Activated CD4-positive, alpha-beta T cell treated with anti-CD3 and anti-CD28 coated beads, Interleukin-2, amount 10 ng/mL, durations not matched to agents 7 days and 5 days (primary cell): ENCODE measurements at regions of chrX and their contacts with region 1.

Region 1: GRCh38 chrX:17046478-17047097 is 100.1 kb downstream of the REPS2 start:
- DNase-seq: peak; percentile 48
- H3K4me3 Mint-ChIP-seq: no peak overlapping the region
- H3K27ac Mint-ChIP-seq: no peak overlapping the region
- H3K4me1 Mint-ChIP-seq: peaks cover 2% of the 10 kb centered on the region
- H3K27me3 Mint-ChIP-seq: no peaks in the 10 kb centered on the region

Region 2: DNA sequence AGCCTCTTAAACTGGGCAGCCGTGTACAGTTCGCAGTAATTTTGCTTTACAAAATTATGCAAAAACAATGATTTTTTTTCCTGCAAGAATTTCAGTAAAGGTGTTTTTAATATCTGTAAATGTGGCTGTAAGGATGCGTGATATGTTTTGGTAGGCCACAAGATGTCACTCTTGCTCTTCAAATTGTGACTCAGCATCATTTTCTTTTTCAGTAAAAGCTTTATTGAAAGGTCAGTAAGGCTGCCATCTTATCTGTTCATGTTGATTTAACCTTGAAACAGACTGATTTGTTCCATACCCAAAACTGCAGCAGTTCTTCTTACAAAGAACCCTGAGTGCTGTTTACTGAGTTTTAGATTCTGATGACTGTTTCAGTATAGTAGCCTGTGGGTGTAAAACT is 220.4 kb before region 1 on chrX:
- CTCF ChIA-PET with region 1: interaction called, 11 read pairs
- POLR2A ChIA-PET with region 1: no interaction called
- DNase-seq: peak; percentile 18
- H3K4me3 Mint-ChIP-seq: no peak overlapping the region
- H3K27ac Mint-ChIP-seq: no peak overlapping the region
- H3K4me1 Mint-ChIP-seq: peaks cover 12% of the 10 kb centered on the region
- H3K27me3 Mint-ChIP-seq: no peaks in the 10 kb centered on the region